Esophagus muscularis mucosa (tissue), 4 donors: ENCODE measurements at regions of chr6 and their contacts with region 1.

Region 1: GRCh38 chr6:160930547-160931377 is 60.8 kb upstream of the MAP3K4 start:
- DNase-seq: no peak
- H3K4me3 ChIP-seq: peak overlapping the region; percentile 56 to 63 (median 58)
- H3K27ac ChIP-seq: peak overlapping the region in 1 of 4 donors; percentile 5
- H3K4me1 ChIP-seq: peaks cover 0 to 13% (median 11%) of the 10 kb centered on the region in 4 donors
- H3K27me3 ChIP-seq: peaks cover 0 to 22% (median 0%) of the 10 kb centered on the region in 4 donors
- CTCF ChIP-seq: peak; percentile 85 to 90 (median 90)
- EP300 ChIP-seq: no peak
- POLR2A ChIP-seq: no peak

Region 2: DNA sequence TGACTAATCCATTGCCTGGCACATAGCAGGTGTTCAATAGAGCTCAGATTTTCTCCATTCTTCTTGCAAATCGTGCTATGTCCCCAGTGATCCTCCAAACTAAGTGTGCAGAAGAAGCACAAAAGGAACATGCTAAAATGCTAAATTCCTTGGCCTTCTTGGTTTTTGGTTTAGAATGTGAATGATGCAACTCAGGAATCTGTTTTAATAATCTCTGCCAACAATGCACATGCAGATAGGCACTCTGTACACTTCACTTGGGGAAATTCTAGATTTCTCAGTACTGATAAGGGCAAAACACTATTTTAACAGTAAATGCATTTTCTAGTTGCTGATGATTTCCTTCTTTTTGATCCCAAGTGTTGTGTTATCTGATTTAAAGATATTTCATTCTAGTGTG is 773.9 kb before region 1 on chr6:
- intact Hi-C with region 1: no loop called
- DNase-seq: no peak
- H3K4me3 ChIP-seq: no peak overlapping the region
- H3K27ac ChIP-seq: no peak overlapping the region
- H3K4me1 ChIP-seq: peaks cover 0 to 11% (median 5%) of the 10 kb centered on the region in 4 donors
- H3K27me3 ChIP-seq: no peaks in the 10 kb centered on the region
- CTCF ChIP-seq: no peak
- EP300 ChIP-seq: no peak
- POLR2A ChIP-seq: no peak

Region 3: GRCh38 chr6:160992061-160992979 is 61.6 kb after region 1 on chr6:
- intact Hi-C with region 1: loop called (anchors 2 kb)
- DNase-seq: peak; percentile 91
- H3K4me3 ChIP-seq: peak overlapping the region; percentile 72 to 99 (median 95)
- H3K27ac ChIP-seq: peak overlapping the region; percentile 88 to 95 (median 94)
- H3K4me1 ChIP-seq: peaks cover 10 to 47% (median 28%) of the 10 kb centered on the region in 4 donors
- H3K27me3 ChIP-seq: no peaks in the 10 kb centered on the region
- CTCF ChIP-seq: peak; percentile 54 to 59 (median 58)
- EP300 ChIP-seq: no peak
- POLR2A ChIP-seq: no peak

Region 4: DNA sequence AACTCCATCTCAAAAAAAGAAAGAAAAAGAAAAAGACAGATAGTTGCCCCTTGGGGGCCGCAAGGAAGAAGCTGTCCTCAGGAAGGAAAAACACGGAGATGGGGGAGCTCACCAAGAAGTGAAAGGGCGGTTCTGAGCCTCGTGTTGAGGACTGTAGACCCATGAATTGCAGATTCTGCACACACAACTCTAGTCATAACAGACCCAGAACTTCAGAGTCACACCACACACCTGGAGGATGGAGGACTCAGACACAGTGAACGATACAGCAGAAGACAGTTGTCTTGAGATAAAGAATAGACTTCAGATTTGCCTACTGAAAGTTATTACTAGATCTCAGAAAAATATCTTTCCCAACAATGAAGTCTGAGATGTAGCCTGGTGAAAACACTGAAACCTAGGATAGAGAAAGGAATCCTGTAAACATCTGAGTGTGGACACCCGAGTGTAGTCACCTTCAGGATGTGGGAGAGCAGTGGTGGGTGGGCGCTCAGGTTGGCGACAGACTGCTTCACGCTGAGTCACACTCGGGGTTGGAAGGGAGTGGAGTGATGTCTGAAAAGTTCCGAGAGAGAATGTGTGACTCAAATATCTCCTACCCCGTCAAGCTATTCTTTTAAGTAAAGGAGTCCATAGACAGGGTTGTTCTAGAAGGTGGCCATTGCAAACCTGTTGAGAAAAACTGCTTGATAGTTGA is 149.0 kb after region 1 on chr6:
- intact Hi-C with region 1: loop called (anchors 10 kb)
- DNase-seq: no peak
- H3K4me3 ChIP-seq: no peak overlapping the region
- H3K27ac ChIP-seq: no peak overlapping the region
- H3K4me1 ChIP-seq: no peaks in the 10 kb centered on the region
- H3K27me3 ChIP-seq: no peaks in the 10 kb centered on the region
- CTCF ChIP-seq: no peak
- EP300 ChIP-seq: no peak
- POLR2A ChIP-seq: no peak